ENCODE measurements at regions of chr10 and their contacts with region 1.

Region 1: DNA sequence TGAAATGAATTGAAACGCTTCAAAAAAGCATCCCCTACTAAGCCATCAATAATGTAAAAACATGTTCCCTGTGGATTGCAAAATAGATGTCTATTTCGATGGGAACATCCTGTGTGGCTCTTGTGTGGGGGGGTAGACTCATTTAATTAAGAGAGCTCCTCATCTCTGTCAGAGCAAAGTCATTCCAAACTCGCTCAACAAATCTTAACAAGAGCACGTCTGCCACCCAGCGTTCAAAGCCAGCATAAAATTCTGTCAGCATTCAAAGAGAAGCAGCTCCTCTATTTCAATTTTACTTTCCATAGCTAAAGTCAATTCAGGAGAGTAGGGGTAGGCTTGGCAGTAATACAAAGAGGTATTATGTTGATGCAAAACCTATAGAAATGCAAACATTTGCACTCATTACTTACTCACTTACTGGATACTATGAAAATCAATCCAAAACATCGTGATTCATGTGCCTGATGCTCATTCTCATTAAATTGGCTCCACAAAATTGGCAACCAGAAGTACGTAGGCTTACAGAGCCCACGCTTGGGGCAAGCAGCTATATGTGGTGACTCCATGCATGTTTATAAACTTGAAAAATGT is 114.9 kb downstream of the IPMK start:
- DNase-seq: peak in 1 of 2 donors; percentile 18
- ATAC-seq: peak in 1 of 8 donors; percentile 20
- H3K4me3 ChIP-seq: no peak overlapping the region
- H3K27ac ChIP-seq: no peak overlapping the region
- H3K4me1 ChIP-seq: peaks cover 0 to 7% (median 0%) of the 10 kb centered on the region in 9 donors
- H3K27me3 ChIP-seq: peaks cover 0 to 7% (median 3%) of the 10 kb centered on the region in 7 donors
- CTCF ChIP-seq: peak in 7 of 9 donors; percentile 45 to 62 (median 53)

Region 2: DNA sequence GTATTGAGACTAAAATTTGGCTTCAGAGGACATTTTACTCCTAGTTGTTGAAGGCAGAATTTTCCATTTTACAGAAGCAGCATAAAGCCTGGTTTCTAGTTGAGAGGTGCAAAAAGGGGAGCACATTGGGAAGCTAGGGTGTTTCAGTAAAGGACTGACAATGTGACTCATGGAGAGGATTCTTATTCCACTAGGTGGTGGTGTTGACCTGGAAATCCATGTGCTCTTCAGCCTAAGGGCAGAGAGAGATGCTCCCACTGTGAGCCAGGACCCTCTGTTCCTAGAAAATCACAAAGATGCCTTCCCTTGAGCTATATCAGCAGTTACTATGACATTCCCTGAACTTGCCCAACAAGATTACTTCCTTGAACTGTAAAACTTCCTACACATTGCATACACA is 572.8 kb before region 1 on chr10:
- intact Hi-C with region 1: loop called in 6 of 10 experiments (anchors 5 to 10 kb)
- DNase-seq: peak in 1 of 2 donors; percentile 15
- ATAC-seq: peak in 3 of 8 donors; percentile 44 to 71 (median 46)
- H3K4me3 ChIP-seq: no peak overlapping the region
- H3K27ac ChIP-seq: no peak overlapping the region
- H3K4me1 ChIP-seq: no peaks in the 10 kb centered on the region
- H3K27me3 ChIP-seq: no peaks in the 10 kb centered on the region
- CTCF ChIP-seq: peak in 8 of 9 donors; percentile 12 to 61 (median 47)